ENCODE measurements at regions of chr9 and their contacts with region 1.

Region 1: GRCh38 chr9:130997925-130998596 is 10.9 kb upstream of the LAMC3 start:
- DNase-seq: peak; percentile 96
- H3K4me3 ChIP-seq: no peak overlapping the region; a peak in 1 of 4 replicates
- H3K27ac ChIP-seq: no peak overlapping the region
- H3K4me1 ChIP-seq: peaks cover 2 to 6% of the 10 kb centered on the region in 2 experiments; a peak in 1 of 4 replicates
- H3K27me3 ChIP-seq: peaks cover 21% of the 10 kb centered on the region; the same call in 1 of the 2 replicates
- CTCF ChIP-seq: peak; percentile 85
- EP300 ChIP-seq: no peak
- RAD21 ChIP-seq: peak; percentile 80

Region 2: GRCh38 chr9:130820135-130820738 is 177.8 kb before region 1 on chr9:
- CTCF ChIA-PET with region 1: no interaction called
- POLR2A ChIA-PET with region 1: no interaction called
- DNase-seq: no peak
- H3K4me3 ChIP-seq: no peak overlapping the region
- H3K27ac ChIP-seq: no peak overlapping the region
- H3K4me1 ChIP-seq: peaks cover 15 to 22% of the 10 kb centered on the region in 2 experiments; a peak in 3 of 4 replicates
- H3K27me3 ChIP-seq: no peaks in the 10 kb centered on the region
- CTCF ChIP-seq: no peak
- EP300 ChIP-seq: no peak
- RAD21 ChIP-seq: no peak

Region 3: GRCh38 chr9:130940693-130941576 is 57.1 kb before region 1 on chr9:
- CTCF ChIA-PET with region 1: interaction called, 11 read pairs
- POLR2A ChIA-PET with region 1: no interaction called
- DNase-seq: peak; percentile 84
- H3K4me3 ChIP-seq: peak overlapping the region in 1 of 2 experiments; percentile 28; a peak in 2 of 4 replicates
- H3K27ac ChIP-seq: no peak overlapping the region
- H3K4me1 ChIP-seq: peaks cover 0 to 10% of the 10 kb centered on the region in 2 experiments; a peak in 1 of 4 replicates
- H3K27me3 ChIP-seq: peaks cover 49% of the 10 kb centered on the region
- CTCF ChIP-seq: peak; percentile 83
- EP300 ChIP-seq: no peak
- RAD21 ChIP-seq: peak; percentile 79

Region 4: GRCh38 chr9:130973169-130973936 is 24.7 kb before region 1 on chr9:
- CTCF ChIA-PET with region 1: interaction called, 10 read pairs
- POLR2A ChIA-PET with region 1: no interaction called
- DNase-seq: no peak
- H3K4me3 ChIP-seq: no peak overlapping the region
- H3K27ac ChIP-seq: no peak overlapping the region
- H3K4me1 ChIP-seq: no peaks in the 10 kb centered on the region; a peak in 1 of 4 replicates
- H3K27me3 ChIP-seq: peaks cover 22% of the 10 kb centered on the region
- CTCF ChIP-seq: no peak
- EP300 ChIP-seq: no peak
- RAD21 ChIP-seq: no peak

Region 5: DNA sequence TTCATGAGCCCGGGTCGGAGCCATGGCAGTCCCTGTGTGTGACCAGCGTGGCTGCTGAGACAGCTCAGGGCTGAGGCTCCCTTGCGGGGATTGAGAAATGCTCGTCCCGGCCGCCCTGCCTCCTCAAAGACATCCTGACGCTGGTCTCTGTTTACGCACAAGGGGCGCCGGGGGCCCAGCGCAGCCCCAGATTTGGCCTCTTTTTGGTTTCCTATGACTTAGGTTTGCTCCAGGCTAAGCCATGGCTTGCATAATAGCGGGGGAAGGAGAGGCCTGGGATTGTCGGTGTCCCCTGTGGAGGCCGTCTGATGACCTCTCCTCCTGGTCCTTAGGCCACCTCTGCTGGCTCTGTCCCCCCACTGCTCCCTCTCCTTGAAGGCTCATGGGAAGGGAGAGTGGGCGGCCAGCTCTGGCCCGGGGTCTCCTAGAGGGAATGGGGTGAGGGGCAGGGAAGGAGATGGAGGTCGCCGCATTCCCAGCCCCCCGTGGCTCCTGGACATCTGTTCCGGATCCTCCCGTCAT is 14.4 kb after region 1 on chr9:
- CTCF ChIA-PET with region 1: interaction called, 19 read pairs
- POLR2A ChIA-PET with region 1: no interaction called
- DNase-seq: peak; percentile 23
- H3K4me3 ChIP-seq: no peak overlapping the region
- H3K27ac ChIP-seq: no peak overlapping the region
- H3K4me1 ChIP-seq: no peaks in the 10 kb centered on the region; a peak in 1 of 4 replicates
- H3K27me3 ChIP-seq: peaks cover 25% of the 10 kb centered on the region
- CTCF ChIP-seq: no peak
- EP300 ChIP-seq: no peak
- RAD21 ChIP-seq: no peak

Region 6: DNA sequence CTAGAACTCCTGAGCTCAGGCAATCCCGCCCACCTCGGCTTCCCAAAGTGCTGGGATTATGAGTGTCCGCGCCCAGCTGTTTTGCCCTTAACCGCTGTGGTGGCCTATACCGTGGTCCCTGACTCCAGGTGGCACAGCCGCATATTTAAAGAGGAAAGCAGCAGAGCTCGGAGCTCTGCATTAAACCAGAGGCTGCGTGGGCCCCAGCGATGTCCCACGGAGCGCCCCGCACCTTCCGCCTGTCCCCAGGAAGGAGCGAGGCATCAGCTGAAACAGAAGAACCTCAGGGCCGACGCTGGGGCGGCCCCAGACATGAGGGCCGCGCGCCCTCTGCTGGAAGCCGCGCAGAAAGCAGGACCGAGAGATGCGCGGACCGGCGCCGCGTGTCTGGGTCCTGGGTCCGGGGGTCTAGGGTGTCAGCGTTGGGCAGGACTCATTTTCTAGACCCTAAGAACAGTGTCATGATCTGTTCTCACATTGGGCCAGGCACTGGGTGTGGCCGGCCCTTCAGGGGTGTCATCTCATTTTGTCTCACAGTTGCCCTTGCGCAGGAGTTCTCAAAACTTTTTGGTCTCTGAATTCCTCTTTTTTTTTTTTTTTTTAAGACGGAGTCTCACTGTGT is 48.6 kb after region 1 on chr9:
- CTCF ChIA-PET with region 1: interaction called, 35 read pairs
- POLR2A ChIA-PET with region 1: no interaction called
- DNase-seq: peak; percentile 89
- H3K4me3 ChIP-seq: peak overlapping the region in 1 of 2 experiments; percentile 55; a peak in 1 of 4 replicates
- H3K27ac ChIP-seq: no peak overlapping the region
- H3K4me1 ChIP-seq: no peaks in the 10 kb centered on the region; a peak in 1 of 4 replicates
- H3K27me3 ChIP-seq: no peaks in the 10 kb centered on the region
- CTCF ChIP-seq: peak; percentile 89
- EP300 ChIP-seq: no peak
- RAD21 ChIP-seq: peak; percentile 85

Region 7: GRCh38 chr9:131366761-131367401 is 368.8 kb after region 1 on chr9:
- CTCF ChIA-PET with region 1: no interaction called
- POLR2A ChIA-PET with region 1: no interaction called
- DNase-seq: peak; percentile 63
- H3K4me3 ChIP-seq: no peak overlapping the region
- H3K27ac ChIP-seq: no peak overlapping the region
- H3K4me1 ChIP-seq: no peaks in the 10 kb centered on the region; a peak in 1 of 4 replicates
- H3K27me3 ChIP-seq: no peaks in the 10 kb centered on the region
- CTCF ChIP-seq: peak; percentile 38
- EP300 ChIP-seq: no peak
- RAD21 ChIP-seq: peak; percentile 72

Measured in SK-N-SH (cell line).